ENCODE measurements at regions of chr12 and their contacts with region 1.

Region 1: DNA sequence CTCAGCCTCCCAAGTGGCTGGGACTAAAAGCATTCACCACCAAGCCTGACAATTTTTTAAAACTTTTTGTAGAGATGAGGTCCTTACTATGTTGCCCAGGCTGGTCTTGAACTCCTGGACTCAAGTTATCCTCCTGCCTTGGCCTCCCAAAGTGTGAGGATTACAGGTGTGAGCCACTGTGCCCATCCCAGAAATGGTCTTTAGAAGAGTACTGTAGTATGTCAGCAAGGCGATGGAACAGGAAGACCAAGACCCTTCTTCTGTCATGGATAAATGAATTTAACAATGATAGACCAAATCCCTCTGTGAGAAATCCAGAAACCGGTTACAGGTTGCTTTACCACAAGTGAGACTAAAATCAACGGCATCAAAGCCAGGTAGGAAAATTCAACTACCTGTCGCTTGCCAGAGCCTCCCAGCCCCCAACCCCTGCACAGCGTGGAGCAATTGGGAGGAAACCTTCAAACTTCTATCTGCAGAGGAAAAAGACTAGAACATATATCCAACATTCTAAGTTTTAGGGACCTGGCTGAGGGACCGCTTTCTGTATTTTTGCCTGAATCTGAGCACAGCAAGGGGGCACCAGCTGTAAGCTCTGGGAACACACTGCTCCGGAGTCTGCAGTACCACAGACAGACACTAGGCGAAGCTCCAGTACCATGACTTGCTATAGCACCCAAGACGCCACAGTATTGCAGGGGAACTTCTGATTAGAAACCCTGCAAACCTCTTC is 51.3 kb downstream of the CPSF6 start:
- DNase-seq: peak; percentile 16
- H3K4me3 ChIP-seq: no peak overlapping the region
- CTCF ChIP-seq: peak; percentile 77

Region 2: DNA sequence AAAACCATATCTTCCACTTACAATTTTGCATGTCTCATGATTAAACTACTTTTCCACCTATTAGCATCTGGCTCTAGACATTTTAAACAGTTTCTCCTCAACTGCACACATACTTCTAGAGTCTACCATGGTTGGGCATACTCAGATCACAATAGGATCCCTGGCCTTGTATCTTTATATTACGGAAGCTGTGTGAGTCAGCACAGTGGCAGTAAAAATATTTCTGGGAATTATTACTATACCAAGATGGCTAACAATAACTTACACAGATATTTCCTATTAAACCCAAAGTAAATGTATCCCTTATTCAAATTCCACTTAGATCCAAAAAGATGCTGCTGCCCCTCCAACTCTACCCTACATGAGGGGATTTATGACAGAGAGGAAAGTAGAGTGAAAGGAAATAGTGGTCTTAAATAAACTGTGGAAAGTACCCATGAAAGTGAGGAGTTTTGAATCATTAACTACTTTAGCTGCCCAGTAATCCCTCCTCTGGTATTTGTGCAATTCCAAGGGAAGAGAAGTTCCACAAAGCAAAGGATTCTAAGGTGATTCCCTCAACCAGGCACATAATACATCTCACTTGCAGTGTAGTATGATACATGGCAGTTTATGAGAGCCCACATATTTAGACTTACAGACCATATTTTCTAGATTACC is 65.3 kb before region 1 on chr12:
- CTCF ChIA-PET with region 1: no interaction called
- POLR2A ChIA-PET with region 1: no interaction called
- DNase-seq: no peak
- H3K4me3 ChIP-seq: no peak overlapping the region
- CTCF ChIP-seq: no peak

Region 3: DNA sequence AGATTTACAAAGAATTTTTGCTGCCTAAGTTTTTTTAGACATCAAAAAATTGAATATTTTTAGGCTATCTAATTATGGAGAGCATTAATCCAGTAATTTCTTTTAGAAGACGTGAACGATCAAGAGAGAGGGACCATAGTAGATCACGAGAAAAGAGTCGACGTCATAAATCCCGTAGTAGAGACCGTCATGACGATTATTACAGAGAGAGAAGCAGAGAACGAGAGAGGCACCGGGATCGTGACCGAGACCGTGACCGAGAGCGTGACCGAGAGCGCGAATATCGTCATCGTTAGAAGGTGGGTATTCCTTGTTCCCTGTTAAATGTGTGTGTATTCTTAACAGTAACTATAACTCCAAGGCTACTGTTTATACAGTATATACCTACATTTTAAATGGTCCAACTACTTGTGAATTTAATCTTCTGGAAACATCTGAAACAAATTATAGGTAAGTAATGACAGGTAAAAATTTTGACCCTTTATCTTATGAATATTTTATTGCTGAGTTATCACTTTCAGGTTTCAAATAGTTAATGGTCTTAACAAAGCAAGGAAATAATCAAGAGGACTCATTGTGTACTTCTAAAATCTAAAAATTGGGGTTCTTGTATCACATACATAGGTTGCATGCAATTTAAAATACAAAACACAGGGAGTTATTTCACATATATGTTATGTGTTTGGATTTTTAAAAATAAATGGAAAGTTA is 28.3 kb before region 1 on chr12:
- CTCF ChIA-PET with region 1: no interaction called
- POLR2A ChIA-PET with region 1: no interaction called
- DNase-seq: no peak
- H3K4me3 ChIP-seq: no peak overlapping the region
- CTCF ChIP-seq: no peak

Region 4: DNA sequence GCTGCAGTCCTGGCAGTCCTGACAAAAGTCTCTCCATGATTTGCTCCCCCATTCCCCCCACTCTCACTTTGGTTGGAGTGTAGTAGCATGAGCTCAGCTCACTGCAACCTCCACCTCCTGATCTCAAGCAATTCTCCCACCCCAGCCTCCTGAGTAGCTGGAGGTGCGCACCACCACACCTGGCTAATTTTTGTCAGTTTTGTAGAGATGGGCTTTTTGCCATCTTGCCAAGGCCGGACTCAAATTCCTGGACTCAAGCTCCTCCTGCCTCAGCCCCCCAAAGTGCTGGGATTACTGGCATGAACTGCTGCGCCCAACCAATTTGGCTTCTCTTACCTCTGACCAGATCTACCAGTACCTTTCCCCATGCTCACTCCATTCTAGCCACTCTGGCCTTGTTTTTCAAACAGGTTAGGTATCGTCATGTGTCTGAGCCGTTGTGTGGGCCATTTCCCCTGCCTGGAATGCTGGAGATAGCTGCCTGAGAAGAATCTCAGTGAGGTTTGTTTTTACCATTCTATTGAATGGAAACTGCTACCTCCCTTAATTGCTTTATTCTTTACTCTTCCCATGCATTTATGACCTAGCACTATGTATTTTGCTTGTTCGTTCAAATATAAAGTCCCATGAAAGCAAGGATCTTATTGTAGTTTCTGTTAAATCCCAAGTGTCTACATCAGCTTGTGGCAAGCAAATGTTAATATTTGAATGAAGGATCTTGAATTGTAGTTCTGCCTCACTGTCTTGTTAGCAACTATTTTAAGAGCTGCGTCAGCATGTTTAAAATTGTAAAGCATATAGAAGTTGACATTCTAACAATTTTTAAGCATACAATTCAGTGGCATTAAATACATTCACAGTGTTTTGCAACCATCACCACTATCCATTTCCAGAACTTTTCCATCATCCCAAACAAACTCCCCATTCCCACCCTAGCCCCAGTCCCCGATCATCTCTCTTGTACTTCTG is 11.6 kb before region 1 on chr12:
- CTCF ChIA-PET with region 1: interaction called, 14 read pairs
- POLR2A ChIA-PET with region 1: no interaction called
- DNase-seq: no peak
- H3K4me3 ChIP-seq: no peak overlapping the region
- CTCF ChIP-seq: no peak

Region 5: DNA sequence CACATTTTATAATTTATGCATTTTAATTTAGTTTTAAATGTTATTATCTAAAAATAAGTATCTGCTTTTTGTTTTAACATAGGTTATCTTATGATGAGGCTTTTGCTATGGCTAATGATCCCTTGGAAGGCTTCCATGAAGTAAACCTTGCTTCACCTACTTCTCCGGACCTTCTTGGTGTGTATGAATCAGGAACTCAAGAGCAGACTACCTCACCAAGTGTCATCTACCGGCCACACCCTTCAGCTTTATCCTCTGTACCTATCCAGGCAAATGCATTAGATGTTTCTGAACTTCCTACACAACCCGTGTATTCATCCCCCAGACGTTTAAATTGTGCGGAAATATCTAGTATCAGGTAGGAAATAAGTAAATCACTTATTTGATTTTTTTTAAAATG is 464.6 kb after region 1 on chr12:
- CTCF ChIA-PET with region 1: no interaction called
- POLR2A ChIA-PET with region 1: no interaction called
- DNase-seq: no peak
- H3K4me3 ChIP-seq: no peak overlapping the region
- CTCF ChIP-seq: no peak